Activated B cell treated with CpG ODN at 0.5 μM for 24 hours (primary cell): ENCODE measurements at regions of chr15 and their contacts with region 1.

Region 1: GRCh38 chr15:78241007-78241406 is 6.6 kb upstream of the ACSBG1 start:
- DNase-seq: peak; percentile 77
- ATAC-seq: peak; percentile 94
- H3K4me3 Mint-ChIP-seq: no peak overlapping the region
- H3K27ac Mint-ChIP-seq: no peak overlapping the region
- H3K4me1 Mint-ChIP-seq: peaks cover 2% of the 10 kb centered on the region
- H3K27me3 Mint-ChIP-seq: no peaks in the 10 kb centered on the region
- CTCF ChIP-seq: no peak

Region 2: GRCh38 chr15:78000091-78000926 is 240.7 kb before region 1 on chr15:
- CTCF ChIA-PET with region 1: interaction called, 6 read pairs
- POLR2A ChIA-PET with region 1: no interaction called
- intact Hi-C with region 1: loop called (anchors 2 kb)
- DNase-seq: peak; percentile 60
- ATAC-seq: peak; percentile 97
- H3K4me3 Mint-ChIP-seq: no peak overlapping the region
- H3K27ac Mint-ChIP-seq: no peak overlapping the region
- H3K4me1 Mint-ChIP-seq: peaks cover 8% of the 10 kb centered on the region
- H3K27me3 Mint-ChIP-seq: no peaks in the 10 kb centered on the region
- CTCF ChIP-seq: no peak

Region 3: GRCh38 chr15:78654272-78654671 is 413.3 kb after region 1 on chr15:
- CTCF ChIA-PET with region 1: no interaction called
- POLR2A ChIA-PET with region 1: no interaction called
- intact Hi-C with region 1: no loop called
- DNase-seq: no peak
- ATAC-seq: no peak
- H3K4me3 Mint-ChIP-seq: no peak overlapping the region
- H3K27ac Mint-ChIP-seq: no peak overlapping the region
- H3K4me1 Mint-ChIP-seq: no peaks in the 10 kb centered on the region
- H3K27me3 Mint-ChIP-seq: peaks cover 5% of the 10 kb centered on the region
- CTCF ChIP-seq: no peak